Mammary epithelial cell (primary cell): ENCODE measurements at regions of chr14 and their contacts with region 1.

Region 1: GRCh38 chr14:23483236-23483854 is 13.8 kb downstream of the NGDN start:
- DNase-seq: no peak
- H3K4me3 ChIP-seq: no peak overlapping the region
- H3K27ac ChIP-seq: no peak overlapping the region
- H3K4me1 ChIP-seq: no peaks in the 10 kb centered on the region
- H3K27me3 ChIP-seq: no peaks in the 10 kb centered on the region
- CTCF ChIP-seq: peak; percentile 30 to 38

Region 2: GRCh38 chr14:23366426-23366921 is 116.9 kb before region 1 on chr14:
- CTCF ChIA-PET with region 1: no interaction called
- dilution Hi-C with region 1: no loop called
- in situ Hi-C with region 1: no loop called
- intact Hi-C with region 1: no loop called
- DNase-seq: peak; percentile 60
- H3K4me3 ChIP-seq: peak overlapping the region in 2 of 3 experiments; percentile 12 to 34
- H3K27ac ChIP-seq: no peak overlapping the region
- H3K4me1 ChIP-seq: peaks cover 22% of the 10 kb centered on the region
- H3K27me3 ChIP-seq: peaks cover 7% of the 10 kb centered on the region
- CTCF ChIP-seq: no peak

Region 3: DNA sequence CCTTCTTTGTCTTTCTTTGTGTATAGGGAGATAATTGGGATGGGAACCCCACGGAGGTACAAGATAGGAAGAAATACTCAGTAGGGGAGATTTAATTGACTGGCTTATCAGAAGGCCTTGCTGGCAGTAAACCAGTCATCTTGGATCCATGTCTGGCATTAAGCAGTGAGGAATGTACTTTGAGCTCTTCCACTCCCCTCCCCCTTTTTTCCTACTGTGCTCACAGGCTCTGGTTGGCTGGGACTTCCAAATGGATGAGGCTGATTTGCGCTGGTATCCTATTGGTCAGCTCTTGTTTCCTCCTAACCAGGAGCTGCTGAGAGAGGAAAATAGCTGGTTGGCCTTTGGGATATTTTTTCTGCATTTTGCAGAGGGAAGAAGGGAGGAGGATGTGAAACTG is 10.9 kb after region 1 on chr14:
- CTCF ChIA-PET with region 1: interaction called, 13 read pairs
- dilution Hi-C with region 1: no loop called
- in situ Hi-C with region 1: no loop called
- intact Hi-C with region 1: no loop called
- DNase-seq: no peak
- H3K4me3 ChIP-seq: no peak overlapping the region
- H3K27ac ChIP-seq: no peak overlapping the region
- H3K4me1 ChIP-seq: no peaks in the 10 kb centered on the region
- H3K27me3 ChIP-seq: no peaks in the 10 kb centered on the region
- CTCF ChIP-seq: no peak

Region 4: GRCh38 chr14:23530375-23531055 is 47.2 kb after region 1 on chr14:
- CTCF ChIA-PET with region 1: no interaction called
- dilution Hi-C with region 1: loop called (anchors 5 kb)
- in situ Hi-C with region 1: no loop called
- intact Hi-C with region 1: no loop called
- DNase-seq: no peak
- H3K4me3 ChIP-seq: no peak overlapping the region
- H3K27ac ChIP-seq: no peak overlapping the region
- H3K4me1 ChIP-seq: no peaks in the 10 kb centered on the region
- H3K27me3 ChIP-seq: no peaks in the 10 kb centered on the region
- CTCF ChIP-seq: no peak

Region 5: DNA sequence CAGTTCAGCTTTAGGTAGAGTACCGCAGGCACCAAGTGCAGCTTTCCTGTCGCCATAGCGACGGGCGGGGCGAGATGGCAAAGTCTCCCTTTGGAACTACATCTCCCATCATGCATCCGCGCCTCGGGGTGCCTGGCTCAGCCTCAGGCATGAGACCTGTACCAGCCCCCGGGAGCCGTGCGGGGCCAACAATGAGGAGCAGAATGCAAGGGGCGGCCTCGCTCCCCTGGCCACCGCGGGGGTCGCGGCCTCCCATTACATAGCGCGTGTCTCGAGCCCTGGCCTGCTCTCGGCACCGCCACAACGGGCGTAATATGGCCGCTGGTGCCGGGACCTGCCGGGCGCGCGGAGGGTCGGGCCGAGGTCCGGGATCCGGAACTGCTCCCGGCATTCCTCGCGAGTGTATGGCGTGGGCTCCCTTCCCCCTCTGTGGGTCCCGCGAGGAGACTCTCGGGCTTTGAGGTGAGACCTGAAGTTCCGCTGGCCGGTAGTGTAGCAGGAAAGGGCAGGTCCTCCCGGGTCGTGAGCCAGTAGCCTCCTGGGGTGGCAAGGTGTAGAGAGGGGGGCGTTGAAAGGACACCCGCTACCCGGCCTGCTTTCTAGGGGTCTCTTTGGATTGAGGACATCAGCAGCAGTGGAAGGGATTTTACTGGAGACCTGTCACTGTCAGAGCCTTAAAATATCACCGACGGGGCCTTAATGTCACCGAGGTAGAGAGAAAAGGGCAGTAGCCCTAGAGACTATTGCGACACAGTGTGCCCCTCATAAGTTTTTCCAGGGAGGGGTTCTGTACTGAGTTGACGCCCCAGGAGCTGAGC is 72.7 kb after region 1 on chr14 and contains the start of gene THTPA:
- CTCF ChIA-PET with region 1: interaction called, 6 read pairs
- dilution Hi-C with region 1: no loop called
- in situ Hi-C with region 1: loop called (anchors 5 kb)
- intact Hi-C with region 1: no loop called
- DNase-seq: peak; percentile 84
- H3K4me3 ChIP-seq: peak within 1 kb of the TSS; percentile 67 to 95 (median 70)
- H3K27ac ChIP-seq: peak within 1 kb of the TSS; percentile 45
- H3K4me1 ChIP-seq: peaks cover 12% of the 10 kb centered on the region
- H3K27me3 ChIP-seq: no peaks in the 10 kb centered on the region
- CTCF ChIP-seq: no peak
- total RNA-seq, gene THTPA: 10.7 to 10.8 TPM